MCF 10A (cell line): ENCODE measurements at regions of chr12 and their contacts with region 1.

Region 1: DNA sequence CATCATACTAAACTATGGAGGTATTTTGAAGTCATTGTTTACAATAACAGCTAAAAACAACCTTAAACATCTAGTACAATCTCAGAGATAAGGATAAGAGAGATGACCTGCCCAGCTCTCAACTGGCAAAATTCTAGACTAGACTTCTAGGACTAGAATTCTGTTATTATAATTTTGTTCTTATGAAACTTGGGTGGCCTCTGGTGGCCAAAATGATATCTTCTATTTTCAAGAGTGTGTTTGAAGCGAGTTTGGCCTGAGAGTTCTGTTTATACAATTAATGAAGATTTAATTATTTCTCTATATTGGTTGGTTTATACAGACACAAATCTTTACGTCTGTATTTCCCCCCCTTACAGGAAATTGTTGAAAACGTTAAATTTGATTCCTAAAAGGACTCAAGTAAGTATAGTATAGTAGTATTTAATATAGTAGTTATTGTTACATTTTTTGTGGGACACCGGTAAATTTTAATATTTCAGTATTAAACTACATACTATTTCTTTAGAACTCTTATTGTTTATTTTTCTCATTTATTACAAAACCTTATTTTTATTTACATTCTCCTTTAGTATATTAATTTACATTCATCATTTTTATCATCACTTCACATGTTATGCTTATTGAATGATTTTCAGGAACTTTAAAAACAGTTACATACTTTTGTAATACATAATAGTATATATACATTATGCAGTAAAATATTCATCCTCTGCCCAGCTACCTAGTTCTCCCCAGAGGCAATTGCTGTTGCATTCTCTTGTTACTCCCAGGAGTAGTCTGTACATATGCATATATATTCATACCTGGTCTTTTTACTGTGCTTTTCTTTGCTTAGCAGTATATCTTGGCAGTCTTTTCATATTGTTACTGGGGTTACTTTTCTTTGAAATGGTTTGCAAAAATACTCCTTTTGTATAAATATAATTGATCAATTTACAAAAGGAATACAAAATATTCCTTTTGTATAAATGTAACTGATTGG is 6.6 kb downstream of the PPHLN1 start:
- DNase-seq: peak; percentile 53
- H3K4me3 Mint-ChIP-seq: no peak overlapping the region
- H3K27ac Mint-ChIP-seq: peak overlapping the region; percentile 16
- H3K4me1 Mint-ChIP-seq: peaks cover 38% of the 10 kb centered on the region
- H3K27me3 Mint-ChIP-seq: no peaks in the 10 kb centered on the region
- CTCF ChIP-seq: peak; percentile 55

Region 2: GRCh38 chr12:41724216-41724615 is 608.4 kb before region 1 on chr12:
- CTCF ChIA-PET with region 1: no interaction called
- POLR2A ChIA-PET with region 1: no interaction called
- intact Hi-C with region 1: no loop called
- DNase-seq: peak; percentile 20
- H3K4me3 Mint-ChIP-seq: no peak overlapping the region
- H3K27ac Mint-ChIP-seq: no peak overlapping the region
- H3K4me1 Mint-ChIP-seq: no peaks in the 10 kb centered on the region
- H3K27me3 Mint-ChIP-seq: peaks cover 11% of the 10 kb centered on the region
- CTCF ChIP-seq: no peak

Region 3: GRCh38 chr12:42039176-42039575 is 293.4 kb before region 1 on chr12:
- CTCF ChIA-PET with region 1: interaction called, 3 read pairs
- POLR2A ChIA-PET with region 1: no interaction called
- intact Hi-C with region 1: loop called (anchors 5 kb)
- DNase-seq: peak; percentile 83
- H3K4me3 Mint-ChIP-seq: no peak overlapping the region
- H3K27ac Mint-ChIP-seq: no peak overlapping the region
- H3K4me1 Mint-ChIP-seq: peaks cover 8% of the 10 kb centered on the region
- H3K27me3 Mint-ChIP-seq: no peaks in the 10 kb centered on the region
- CTCF ChIP-seq: no peak

Region 4: DNA sequence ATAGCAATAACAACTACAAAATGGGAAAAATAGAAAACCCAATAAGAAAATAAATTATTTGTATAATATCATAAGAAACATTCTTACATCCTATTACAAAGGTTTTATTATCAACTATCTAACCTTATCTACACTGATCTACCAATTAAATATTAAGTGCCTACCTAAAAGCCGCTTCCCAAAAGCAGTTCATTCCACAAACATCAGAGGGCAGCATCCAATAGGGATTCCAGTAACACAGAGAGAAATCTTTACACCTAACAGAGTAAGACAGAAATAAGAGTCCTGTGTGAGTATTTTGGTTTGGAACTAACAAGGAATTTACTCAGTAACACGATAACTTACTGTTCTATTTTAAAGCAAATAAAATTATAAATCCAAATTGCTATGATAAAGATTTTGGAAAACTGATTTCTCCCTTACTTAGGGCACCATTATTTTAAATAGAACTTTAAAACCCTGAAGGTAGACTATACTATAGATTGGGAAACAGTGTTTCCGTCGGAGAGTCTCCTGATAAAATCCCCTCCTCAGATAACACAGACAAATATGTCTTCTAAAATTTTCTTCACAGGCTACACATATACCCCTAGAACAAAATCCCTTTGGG is 202.9 kb before region 1 on chr12:
- CTCF ChIA-PET with region 1: interaction called, 33 read pairs
- POLR2A ChIA-PET with region 1: interaction called, 4 read pairs
- intact Hi-C with region 1: loop called (anchors 1 kb)
- DNase-seq: peak; percentile 81
- H3K4me3 Mint-ChIP-seq: peak overlapping the region; percentile 66
- H3K27ac Mint-ChIP-seq: peak overlapping the region; percentile 74
- H3K4me1 Mint-ChIP-seq: peaks cover 26% of the 10 kb centered on the region
- H3K27me3 Mint-ChIP-seq: no peaks in the 10 kb centered on the region
- CTCF ChIP-seq: peak; percentile 73

Region 5: DNA sequence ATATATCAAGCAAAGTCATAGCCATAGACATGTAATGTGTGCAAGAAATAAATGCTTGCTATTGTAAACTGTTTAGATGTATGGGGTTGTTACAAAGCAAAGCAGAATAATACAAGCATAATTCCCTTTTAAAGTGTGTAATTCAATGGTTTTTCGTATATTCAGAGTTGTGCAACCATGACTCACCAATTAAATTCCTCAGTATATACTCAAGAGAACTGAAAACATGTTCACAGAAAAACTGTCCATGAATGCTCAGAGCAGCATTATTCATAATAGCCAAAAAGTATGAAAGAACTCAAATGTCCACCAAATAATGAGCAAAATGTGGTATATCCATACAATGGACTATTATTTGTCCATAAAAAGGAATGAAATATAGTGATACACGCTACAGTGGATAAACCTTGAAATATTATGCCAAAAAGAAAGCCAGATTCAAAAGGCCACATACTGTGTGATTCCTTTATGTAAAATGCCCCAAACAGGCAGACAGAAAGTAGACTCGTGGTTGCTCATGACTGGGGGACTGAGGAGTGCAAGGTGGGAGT is 197.3 kb before region 1 on chr12:
- CTCF ChIA-PET with region 1: interaction called, 12 read pairs
- POLR2A ChIA-PET with region 1: interaction called, 4 read pairs
- intact Hi-C with region 1: no loop called
- DNase-seq: peak; percentile 62
- H3K4me3 Mint-ChIP-seq: peak overlapping the region; percentile 10
- H3K27ac Mint-ChIP-seq: peak overlapping the region; percentile 65
- H3K4me1 Mint-ChIP-seq: peaks cover 26% of the 10 kb centered on the region
- H3K27me3 Mint-ChIP-seq: no peaks in the 10 kb centered on the region
- CTCF ChIP-seq: no peak

Region 6: GRCh38 chr12:42199007-42199406 is 133.6 kb before region 1 on chr12:
- CTCF ChIA-PET with region 1: no interaction called
- POLR2A ChIA-PET with region 1: no interaction called
- intact Hi-C with region 1: no loop called
- DNase-seq: no peak
- H3K4me3 Mint-ChIP-seq: no peak overlapping the region
- H3K27ac Mint-ChIP-seq: no peak overlapping the region
- H3K4me1 Mint-ChIP-seq: peaks cover 6% of the 10 kb centered on the region
- H3K27me3 Mint-ChIP-seq: no peaks in the 10 kb centered on the region
- CTCF ChIP-seq: no peak

Region 7: DNA sequence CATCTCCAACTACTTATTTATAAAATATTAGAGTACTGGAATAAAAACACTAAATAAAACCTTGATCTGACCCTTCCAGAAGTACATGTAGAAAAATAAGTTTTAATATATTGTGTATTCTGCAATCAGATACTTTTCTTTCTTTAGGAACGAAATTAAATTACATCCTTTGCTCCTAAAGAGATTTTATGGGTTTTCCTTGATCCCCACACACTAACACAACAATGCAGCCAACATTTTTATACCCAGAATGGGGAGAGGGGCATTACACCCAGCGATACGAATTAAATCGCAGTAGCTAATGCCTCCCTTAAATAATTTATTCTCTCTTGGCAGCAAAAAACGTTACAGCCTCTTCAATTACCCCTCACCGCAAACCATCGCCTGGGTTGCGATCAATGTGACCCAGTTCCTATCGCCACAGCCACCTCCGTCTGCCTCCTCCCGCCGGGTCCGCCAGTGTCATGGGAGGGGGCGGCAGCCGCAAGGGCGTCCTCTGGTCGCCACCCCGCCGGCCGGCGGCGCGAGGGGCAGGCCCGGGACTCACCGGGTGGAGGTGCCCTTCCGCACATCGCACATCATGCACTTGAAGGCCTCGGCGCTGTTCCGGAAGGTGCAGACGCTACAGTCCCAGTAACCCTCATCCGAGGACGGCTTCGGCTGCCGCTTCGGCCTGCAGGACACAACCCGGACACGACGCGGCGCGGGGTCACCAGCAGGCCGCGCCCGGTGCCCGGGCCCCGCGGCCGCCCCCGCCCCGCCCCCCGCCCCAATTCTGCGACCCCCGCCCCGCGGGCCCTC is 95.3 kb before region 1 on chr12:
- CTCF ChIA-PET with region 1: interaction called, 6 read pairs
- POLR2A ChIA-PET with region 1: interaction called, 3 read pairs
- intact Hi-C with region 1: loop called (anchors 1 kb)
- DNase-seq: peak; percentile 72
- H3K4me3 Mint-ChIP-seq: peak overlapping the region; percentile 95
- H3K27ac Mint-ChIP-seq: peak overlapping the region; percentile 97
- H3K4me1 Mint-ChIP-seq: peaks cover 19% of the 10 kb centered on the region
- H3K27me3 Mint-ChIP-seq: no peaks in the 10 kb centered on the region
- CTCF ChIP-seq: peak; percentile 26